ENCODE measurements at regions of chr13 and their contacts with region 1.

Region 1: DNA sequence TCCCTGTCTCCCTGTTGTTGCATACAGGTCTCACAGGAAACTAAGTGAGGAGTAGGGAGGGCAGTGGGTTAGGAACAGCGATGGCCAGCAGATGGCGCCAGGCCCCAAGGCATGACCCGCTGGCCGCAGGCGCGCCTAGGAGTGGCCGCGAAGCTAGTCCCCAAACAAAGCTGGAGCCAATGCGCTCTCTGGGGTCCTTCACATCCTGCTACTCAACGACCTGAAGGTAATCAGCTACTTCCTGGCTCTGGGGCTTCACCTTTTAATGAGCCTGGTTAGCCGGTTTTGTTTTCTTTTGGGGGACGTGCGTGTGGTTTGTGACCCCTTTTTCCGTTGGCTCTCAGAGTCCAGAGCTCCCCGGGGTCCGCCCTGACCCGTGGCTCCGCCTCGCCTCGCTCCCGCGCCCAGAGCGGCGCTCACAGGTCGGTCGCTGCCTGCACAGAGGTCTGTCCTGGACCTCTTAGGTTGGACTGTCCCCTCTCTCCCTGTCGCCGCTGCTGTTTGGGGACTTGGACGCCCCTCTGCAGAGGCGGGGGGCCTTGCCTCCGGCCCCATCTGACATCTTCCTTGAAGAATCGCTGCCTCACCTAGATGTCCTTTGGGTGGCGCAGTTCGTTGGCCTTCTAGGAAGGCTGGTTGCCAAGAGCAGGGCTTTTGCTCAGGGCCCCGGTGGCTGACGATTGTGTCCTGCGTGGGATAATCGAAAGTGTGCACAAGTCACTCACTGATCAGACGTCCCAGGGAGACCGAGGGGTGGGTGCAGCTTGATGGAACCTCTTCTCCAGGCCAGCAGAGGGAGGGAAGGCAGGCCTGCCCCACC is 62.1 kb upstream of the GTF3A start:
- DNase-seq: peak; percentile 79
- H3K4me3 ChIP-seq: peak overlapping the region; percentile 52
- H3K27ac ChIP-seq: no peak overlapping the region
- H3K4me1 ChIP-seq: no peaks in the 10 kb centered on the region
- CTCF ChIP-seq: peak; percentile 92

Region 2: DNA sequence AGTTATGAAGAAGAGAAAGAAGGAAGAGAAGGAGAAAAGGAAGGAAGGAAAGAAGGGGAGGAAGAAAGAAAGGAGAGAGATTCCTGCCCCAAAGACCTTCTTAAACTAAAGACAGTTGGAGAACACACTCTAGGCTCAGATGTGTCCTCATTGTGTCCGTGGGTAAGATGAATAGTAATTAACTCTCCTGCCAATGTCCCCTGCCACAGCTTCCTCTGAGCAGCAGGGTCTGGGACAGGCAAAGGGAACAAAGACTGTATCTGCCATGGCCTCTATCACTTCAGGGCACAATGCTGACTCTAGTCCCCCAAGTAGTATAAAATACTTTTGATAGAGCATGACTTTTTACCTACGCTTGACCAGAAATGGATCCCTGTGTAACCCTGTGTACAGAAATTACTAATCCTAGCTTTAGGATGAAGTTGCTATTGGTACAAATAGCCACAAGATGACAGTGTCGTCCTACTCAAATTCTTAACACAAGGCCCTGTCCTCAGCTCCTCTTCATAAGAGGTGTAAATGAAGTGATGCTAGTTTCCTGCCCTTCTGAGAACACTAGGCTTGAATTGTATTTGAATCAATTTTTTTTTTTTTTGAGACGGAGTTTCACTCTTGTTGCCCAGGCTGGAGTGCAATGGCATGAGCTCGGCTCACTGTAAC is 415.5 kb before region 1 on chr13:
- CTCF ChIA-PET with region 1: interaction called, 3 read pairs
- POLR2A ChIA-PET with region 1: no interaction called
- intact Hi-C with region 1: loop called (anchors 1 kb)
- DNase-seq: peak; percentile 65
- H3K4me3 ChIP-seq: no peak overlapping the region
- H3K27ac ChIP-seq: no peak overlapping the region
- H3K4me1 ChIP-seq: no peaks in the 10 kb centered on the region
- CTCF ChIP-seq: peak; percentile 81

Region 3: GRCh38 chr13:26985285-26985878 is 376.9 kb before region 1 on chr13:
- CTCF ChIA-PET with region 1: interaction called, 5 read pairs
- POLR2A ChIA-PET with region 1: interaction called, 3 read pairs
- intact Hi-C with region 1: loop called (anchors 1 kb)
- DNase-seq: peak; percentile 82
- H3K4me3 ChIP-seq: no peak overlapping the region
- H3K27ac ChIP-seq: no peak overlapping the region
- H3K4me1 ChIP-seq: no peaks in the 10 kb centered on the region
- CTCF ChIP-seq: peak; percentile 94

Region 4: GRCh38 chr13:27171827-27172494 is 190.3 kb before region 1 on chr13:
- CTCF ChIA-PET with region 1: no interaction called
- POLR2A ChIA-PET with region 1: no interaction called
- intact Hi-C with region 1: loop called (anchors 5 kb)
- DNase-seq: peak; percentile 93
- H3K4me3 ChIP-seq: peak overlapping the region; percentile 82
- H3K27ac ChIP-seq: peak overlapping the region; percentile 61
- H3K4me1 ChIP-seq: peaks cover 53% of the 10 kb centered on the region
- CTCF ChIP-seq: peak; percentile 32; the same call in 1 of the 2 replicates

Region 5: DNA sequence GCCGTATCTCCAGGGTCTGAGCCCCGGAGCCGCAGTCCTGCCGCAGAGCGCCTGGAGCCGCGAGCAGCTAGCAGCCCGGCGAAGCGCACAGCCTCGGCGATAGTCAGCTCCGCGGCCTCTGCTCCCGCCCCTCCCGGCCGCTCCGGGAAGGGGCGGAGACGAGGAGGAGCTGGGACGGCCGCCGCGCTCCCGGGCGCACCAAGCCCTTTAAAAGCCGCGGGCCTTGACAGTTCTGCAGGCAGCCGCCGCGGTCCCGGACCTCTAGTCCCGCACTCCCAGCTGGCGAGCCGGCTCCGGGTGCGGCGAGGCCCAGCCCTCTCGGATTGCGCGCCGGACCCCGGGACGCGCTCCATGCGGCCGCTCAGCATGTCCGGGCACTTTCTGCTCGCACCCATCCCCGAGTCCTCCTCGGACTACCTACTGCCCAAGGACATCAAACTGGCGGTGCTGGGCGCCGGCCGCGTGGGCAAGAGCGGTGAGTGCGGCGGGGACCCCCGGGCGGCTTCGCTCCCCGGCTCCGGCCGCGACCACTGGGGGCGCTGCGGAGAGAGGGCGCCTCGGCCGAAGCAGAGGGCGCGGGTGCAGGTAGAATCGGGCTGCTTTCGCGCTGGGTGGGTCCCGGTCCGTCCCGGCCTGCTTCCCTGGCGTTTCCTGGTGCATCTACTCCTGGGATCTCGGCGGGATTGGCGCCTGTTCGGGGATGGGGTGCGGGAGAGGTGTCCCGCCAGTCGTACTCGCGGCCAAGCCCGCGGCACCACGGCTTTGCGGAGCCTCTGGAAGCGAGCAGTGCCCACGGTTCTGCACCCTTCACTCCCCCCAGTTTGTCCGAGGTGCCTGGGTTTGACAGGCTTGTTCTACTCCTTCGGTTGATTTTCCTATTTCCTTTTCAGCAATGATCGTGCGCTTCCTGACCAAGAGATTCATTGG is 91.4 kb before region 1 on chr13 and contains the start of gene RASL11A:
- CTCF ChIA-PET with region 1: interaction called, 3 read pairs
- POLR2A ChIA-PET with region 1: no interaction called
- intact Hi-C with region 1: loop called (anchors 5 kb)
- DNase-seq: peak; percentile 71
- H3K4me3 ChIP-seq: peak within 1 kb of the TSS; percentile 80
- H3K27ac ChIP-seq: no peak within 1 kb of the TSS
- H3K4me1 ChIP-seq: peaks cover 16% of the 10 kb centered on the region
- CTCF ChIP-seq: peak; percentile 92
- total RNA-seq, gene RASL11A: 1.3 and 5.1 TPM in 2 replicates

Region 6: DNA sequence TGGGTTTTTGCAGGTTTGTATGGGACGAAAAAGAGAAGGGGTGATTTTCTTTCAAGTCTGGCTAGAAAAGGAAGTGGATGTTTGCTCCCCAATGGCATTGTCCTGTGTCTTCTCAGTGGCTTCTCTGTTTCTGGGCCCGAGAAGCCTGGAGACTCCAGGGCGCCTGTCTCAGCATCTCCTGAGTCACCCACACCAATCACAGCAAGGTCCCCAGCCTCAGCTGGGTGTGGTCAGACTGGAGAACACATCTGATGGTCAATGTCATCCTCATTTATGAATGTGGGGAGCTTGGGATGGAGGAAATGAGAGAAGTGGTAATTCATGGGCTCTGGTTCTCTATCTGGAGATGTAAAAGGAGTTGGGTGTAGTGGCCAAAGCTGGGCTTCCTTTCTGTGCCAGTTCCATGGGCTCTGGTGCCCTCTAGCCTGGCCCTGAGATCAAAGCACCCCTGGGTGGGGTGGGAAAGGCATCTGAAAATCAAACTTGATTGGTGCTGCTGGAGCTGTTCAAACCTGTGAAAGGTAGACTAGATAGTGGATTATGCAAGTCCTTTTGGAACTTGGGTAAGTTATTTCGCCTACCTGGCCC is 78.3 kb before region 1 on chr13:
- CTCF ChIA-PET with region 1: interaction called, 3 read pairs
- POLR2A ChIA-PET with region 1: no interaction called
- intact Hi-C with region 1: loop called (anchors 1 kb)
- DNase-seq: peak; percentile 53
- H3K4me3 ChIP-seq: no peak overlapping the region
- H3K27ac ChIP-seq: no peak overlapping the region
- H3K4me1 ChIP-seq: peaks cover 8% of the 10 kb centered on the region
- CTCF ChIP-seq: peak; percentile 72

Region 7: DNA sequence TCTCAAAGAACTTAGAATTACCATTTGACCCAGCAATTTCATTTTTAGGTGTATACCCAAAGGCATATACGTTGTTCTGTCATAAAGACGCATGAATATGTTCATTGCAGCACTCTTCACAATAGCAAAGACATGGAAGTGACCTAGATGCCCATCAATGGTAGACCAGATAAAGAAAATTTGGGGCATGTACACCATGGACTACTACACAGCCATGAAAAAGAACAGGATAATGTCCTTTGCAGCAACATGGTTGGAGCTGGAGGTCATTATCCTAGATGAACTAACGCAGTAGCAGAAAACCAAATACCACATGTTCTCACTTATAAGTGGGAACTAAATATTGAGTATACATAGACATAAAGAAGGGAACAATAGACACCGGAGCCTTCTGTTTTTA is 796.8 kb after region 1 on chr13:
- CTCF ChIA-PET with region 1: interaction called, 10 read pairs
- POLR2A ChIA-PET with region 1: no interaction called
- intact Hi-C with region 1: no loop called
- DNase-seq: no peak
- H3K4me3 ChIP-seq: no peak overlapping the region
- H3K27ac ChIP-seq: no peak overlapping the region
- H3K4me1 ChIP-seq: no peaks in the 10 kb centered on the region
- CTCF ChIP-seq: no peak

Measured in OCI-LY7 (cell line).